Activated B cell treated with CpG ODN at 0.5 μM for 24 hours (primary cell): ENCODE measurements at regions of chr18 and their contacts with region 1.

Region 1: GRCh38 chr18:23586249-23587196 is at the start of gene NPC1:
- DNase-seq: peak; percentile 94
- ATAC-seq: peak; percentile 88
- H3K4me3 Mint-ChIP-seq: peak within 1 kb of the TSS; percentile 91
- H3K27ac Mint-ChIP-seq: peak within 1 kb of the TSS; percentile 95
- H3K4me1 Mint-ChIP-seq: peaks cover 31% of the 10 kb centered on the region
- H3K27me3 Mint-ChIP-seq: no peaks in the 10 kb centered on the region
- CTCF ChIP-seq: peak; percentile 39
- total RNA-seq, gene NPC1: 31.9 and 36.5 TPM in 2 replicates

Region 2: DNA sequence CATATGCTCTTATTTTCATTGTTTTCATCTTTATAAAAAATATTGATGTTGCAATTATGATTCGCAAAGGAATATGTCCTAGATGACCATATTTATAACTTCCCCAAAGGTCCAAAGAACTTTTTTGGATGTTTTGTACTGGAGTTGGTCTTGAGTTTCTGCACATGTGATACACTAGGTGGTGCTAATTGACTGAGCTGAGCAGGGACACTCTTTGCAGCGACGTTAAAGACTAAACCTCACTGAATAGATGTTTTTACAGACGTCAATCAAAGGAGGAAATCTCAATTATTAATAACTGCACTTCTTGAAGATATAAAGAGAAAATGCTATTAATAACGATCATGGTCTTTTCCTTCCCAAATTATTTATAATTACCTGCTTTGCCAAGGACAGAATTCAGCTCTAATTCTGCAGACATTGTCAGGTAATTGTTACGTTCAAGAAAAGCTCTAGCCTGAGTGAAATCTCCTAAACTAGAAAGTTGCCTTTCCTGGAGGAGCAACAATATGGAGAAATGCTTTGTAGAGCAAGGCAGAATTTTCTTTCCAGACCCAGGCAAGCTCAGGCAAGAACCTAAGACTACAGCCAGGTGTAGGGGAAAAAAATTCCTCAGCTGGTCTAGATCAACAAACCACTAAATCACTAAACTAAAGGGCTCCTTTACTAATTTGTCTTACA is 772.7 kb before region 1 on chr18:
- CTCF ChIA-PET with region 1: no interaction called
- POLR2A ChIA-PET with region 1: no interaction called
- intact Hi-C with region 1: loop called (anchors 5 kb)
- DNase-seq: no peak
- ATAC-seq: peak; percentile 56
- H3K4me3 Mint-ChIP-seq: no peak overlapping the region
- H3K27ac Mint-ChIP-seq: no peak overlapping the region
- H3K4me1 Mint-ChIP-seq: no peaks in the 10 kb centered on the region
- H3K27me3 Mint-ChIP-seq: peaks cover 8% of the 10 kb centered on the region
- CTCF ChIP-seq: no peak

Region 3: DNA sequence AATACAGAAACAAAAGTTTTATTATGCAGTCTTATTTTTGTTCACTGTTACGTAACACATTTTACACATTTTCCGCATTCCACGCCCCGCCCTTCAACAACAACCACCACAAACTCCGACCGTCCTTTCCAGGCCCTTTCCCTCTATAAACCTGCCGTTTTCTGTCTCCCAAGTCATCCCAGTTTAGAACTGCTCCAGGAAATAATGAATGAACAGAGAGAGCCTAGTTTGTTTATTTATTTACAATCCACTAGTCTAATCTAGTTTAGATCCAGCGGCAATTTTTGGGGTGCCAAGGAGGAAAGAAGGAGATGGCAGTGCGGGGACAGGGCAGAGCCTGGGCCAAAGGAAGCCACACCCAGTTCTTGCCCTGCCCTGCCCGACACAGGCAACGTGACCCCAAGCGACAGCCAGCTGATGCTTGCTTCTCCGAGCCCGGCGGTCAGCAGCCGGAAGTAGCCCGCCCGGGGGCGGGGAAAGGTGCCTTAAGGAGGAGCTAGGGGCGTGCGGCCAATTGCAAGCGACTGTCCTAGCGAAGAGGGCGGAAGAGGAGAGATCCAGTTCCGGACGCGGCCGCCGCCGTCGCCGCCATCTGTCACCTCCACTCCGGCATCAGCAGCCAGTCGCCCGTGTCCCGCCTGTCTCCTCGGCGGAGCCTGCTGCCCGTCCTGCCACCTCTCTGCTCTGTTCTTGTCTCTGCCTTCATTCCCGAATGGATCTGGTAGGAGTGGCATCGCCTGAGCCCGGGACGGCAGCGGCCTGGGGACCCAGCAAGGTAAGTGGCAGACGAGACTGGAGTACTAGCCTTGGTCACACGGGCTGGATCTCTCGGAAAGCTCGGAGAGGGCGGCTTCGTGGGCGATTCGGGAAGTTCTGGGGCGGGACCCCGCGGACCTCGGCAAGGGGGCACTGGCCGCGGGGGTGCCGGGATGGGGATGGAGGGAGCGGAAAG is 133.5 kb before region 1 on chr18 and contains the start of gene RIOK3:
- CTCF ChIA-PET with region 1: no interaction called
- POLR2A ChIA-PET with region 1: no interaction called
- intact Hi-C with region 1: loop called (anchors 2 kb)
- DNase-seq: peak; percentile 91
- ATAC-seq: peak; percentile 97
- H3K4me3 Mint-ChIP-seq: peak within 1 kb of the TSS; percentile 99
- H3K27ac Mint-ChIP-seq: peak within 1 kb of the TSS; percentile 87
- H3K4me1 Mint-ChIP-seq: peaks cover 67% of the 10 kb centered on the region
- H3K27me3 Mint-ChIP-seq: no peaks in the 10 kb centered on the region
- CTCF ChIP-seq: no peak
- total RNA-seq, gene RIOK3: 90.4 and 92.4 TPM in 2 replicates

Region 4: GRCh38 chr18:23515911-23516546 is 70.5 kb before region 1 on chr18:
- CTCF ChIA-PET with region 1: interaction called, 32 read pairs
- POLR2A ChIA-PET with region 1: interaction called, 12 read pairs
- intact Hi-C with region 1: loop called (anchors 1 kb)
- DNase-seq: peak; percentile 42
- ATAC-seq: peak; percentile 97
- H3K4me3 Mint-ChIP-seq: no peak overlapping the region
- H3K27ac Mint-ChIP-seq: peak overlapping the region; percentile 74
- H3K4me1 Mint-ChIP-seq: peaks cover 35% of the 10 kb centered on the region
- H3K27me3 Mint-ChIP-seq: no peaks in the 10 kb centered on the region
- CTCF ChIP-seq: peak; percentile 78

Region 5: DNA sequence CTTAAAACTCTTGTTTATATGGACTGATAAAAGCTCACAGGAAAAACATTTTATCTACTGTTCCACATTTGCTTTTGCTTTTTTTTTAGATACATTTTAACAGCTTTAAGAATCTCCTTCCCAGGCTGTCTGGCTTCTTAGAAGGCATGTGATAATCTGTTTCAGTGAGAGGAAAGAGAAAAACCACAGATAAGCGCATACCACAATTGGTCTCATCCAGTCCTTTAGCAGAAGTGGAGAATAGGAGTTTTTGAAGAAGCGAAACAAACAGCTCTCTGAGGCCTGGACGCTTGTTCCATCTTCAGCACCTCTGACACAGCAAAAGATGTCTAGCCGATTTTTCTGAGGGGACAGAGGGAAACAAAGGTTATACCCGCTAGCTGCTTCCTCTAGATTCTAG is 45.7 kb before region 1 on chr18:
- CTCF ChIA-PET with region 1: no interaction called
- POLR2A ChIA-PET with region 1: interaction called, 4 read pairs
- intact Hi-C with region 1: loop called (anchors 1 kb)
- DNase-seq: no peak
- ATAC-seq: peak; percentile 49
- H3K4me3 Mint-ChIP-seq: no peak overlapping the region
- H3K27ac Mint-ChIP-seq: peak overlapping the region; percentile 54
- H3K4me1 Mint-ChIP-seq: peaks cover 35% of the 10 kb centered on the region
- H3K27me3 Mint-ChIP-seq: no peaks in the 10 kb centered on the region
- CTCF ChIP-seq: no peak

Region 6: GRCh38 chr18:24019641-24020331 is 433.3 kb after region 1 on chr18:
- CTCF ChIA-PET with region 1: no interaction called
- POLR2A ChIA-PET with region 1: no interaction called
- intact Hi-C with region 1: loop called (anchors 1 kb)
- DNase-seq: no peak
- ATAC-seq: peak; percentile 72
- H3K4me3 Mint-ChIP-seq: peak overlapping the region; percentile 79
- H3K27ac Mint-ChIP-seq: peak overlapping the region; percentile 93
- H3K4me1 Mint-ChIP-seq: peaks cover 85% of the 10 kb centered on the region
- H3K27me3 Mint-ChIP-seq: no peaks in the 10 kb centered on the region
- CTCF ChIP-seq: no peak

Region 7: GRCh38 chr18:24212939-24213338 is 626.4 kb after region 1 on chr18:
- CTCF ChIA-PET with region 1: no interaction called
- POLR2A ChIA-PET with region 1: no interaction called
- intact Hi-C with region 1: no loop called
- DNase-seq: no peak
- ATAC-seq: no peak
- H3K4me3 Mint-ChIP-seq: no peak overlapping the region
- H3K27ac Mint-ChIP-seq: no peak overlapping the region
- H3K4me1 Mint-ChIP-seq: no peaks in the 10 kb centered on the region
- H3K27me3 Mint-ChIP-seq: peaks cover 5% of the 10 kb centered on the region
- CTCF ChIP-seq: no peak